ENCODE measurements at regions of chr18 and their contacts with region 1.

Region 1: GRCh38 chr18:9614401-9615279 is at the start of gene PPP4R1:
- DNase-seq: peak; percentile 85 to 95 (median 92)
- ATAC-seq: peak; percentile 54
- H3K4me3 ChIP-seq: peak within 1 kb of the TSS; percentile 84
- H3K27ac ChIP-seq: peak within 1 kb of the TSS; percentile 85
- H3K4me1 ChIP-seq: peaks cover 12 to 35% of the 10 kb centered on the region in 2 experiments
- H3K27me3 ChIP-seq: no peaks in the 10 kb centered on the region
- CTCF ChIP-seq: no peak
- EP300 ChIP-seq: no peak
- POLR2A ChIP-seq: no peak
- RAD21 ChIP-seq: no peak
- polyA plus RNA-seq, gene PPP4R1: 23.5 to 35.1 TPM

Region 2: GRCh38 chr18:9102508-9103375 is 511.9 kb before region 1 on chr18 and contains the start of gene NDUFV2:
- CTCF ChIA-PET with region 1: no interaction called
- POLR2A ChIA-PET with region 1: no interaction called
- in situ Hi-C with region 1: no loop called
- intact Hi-C with region 1: no loop called
- DNase-seq: peak; percentile 99 to 100 (median 100)
- ATAC-seq: peak; percentile 90
- H3K4me3 ChIP-seq: peak within 1 kb of the TSS; percentile 51
- H3K27ac ChIP-seq: peak within 1 kb of the TSS; percentile 80
- H3K4me1 ChIP-seq: peaks cover 5 to 19% of the 10 kb centered on the region in 2 experiments
- H3K27me3 ChIP-seq: no peaks in the 10 kb centered on the region
- CTCF ChIP-seq: 0 out of 6 replicates have a peak, but pooled peaks of 1 of the 3 experiments have one; percentile 5
- EP300 ChIP-seq: no peak
- POLR2A ChIP-seq: peak; percentile 93
- RAD21 ChIP-seq: no peak
- polyA plus RNA-seq, gene NDUFV2: 384 to 550 TPM

Region 3: GRCh38 chr18:9627642-9628041 is 13.0 kb after region 1 on chr18:
- CTCF ChIA-PET with region 1: no interaction called
- POLR2A ChIA-PET with region 1: interaction called, 21 read pairs
- in situ Hi-C with region 1: no loop called
- intact Hi-C with region 1: no loop called
- DNase-seq: peak in 1 of 4 experiments; percentile 30
- ATAC-seq: peak; percentile 71
- H3K4me3 ChIP-seq: no peak overlapping the region
- H3K27ac ChIP-seq: no peak overlapping the region
- H3K4me1 ChIP-seq: peaks cover 2 to 3% of the 10 kb centered on the region in 2 experiments; a peak in 2 of 5 replicates
- H3K27me3 ChIP-seq: no peaks in the 10 kb centered on the region
- CTCF ChIP-seq: no peak
- EP300 ChIP-seq: no peak
- POLR2A ChIP-seq: no peak
- RAD21 ChIP-seq: no peak

Region 4: DNA sequence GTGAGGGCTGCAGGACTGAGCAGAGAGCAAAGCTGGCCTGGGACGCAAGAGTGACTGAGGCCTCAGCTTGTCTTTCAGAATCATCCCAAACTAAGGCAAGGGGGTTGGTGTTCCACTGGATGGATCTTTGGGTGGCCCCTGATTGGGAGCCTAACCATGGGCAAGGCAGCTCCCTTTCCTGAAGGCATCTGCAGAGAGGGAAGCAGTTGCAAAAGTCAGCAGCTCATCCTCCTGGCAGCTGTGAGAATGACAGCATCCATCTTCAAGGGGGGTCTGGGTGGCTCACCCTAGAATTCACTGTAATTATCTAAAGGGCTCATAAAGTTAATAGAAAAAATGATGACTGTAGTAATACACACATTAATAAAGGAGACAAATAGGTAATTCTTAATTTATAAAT is 46.9 kb after region 1 on chr18:
- CTCF ChIA-PET with region 1: no interaction called
- POLR2A ChIA-PET with region 1: interaction called, 4 read pairs
- in situ Hi-C with region 1: no loop called
- intact Hi-C with region 1: loop called (anchors 5 kb)
- DNase-seq: peak in 2 of 4 experiments; percentile 31 to 41
- ATAC-seq: peak; percentile 66
- H3K4me3 ChIP-seq: no peak overlapping the region
- H3K27ac ChIP-seq: no peak overlapping the region
- H3K4me1 ChIP-seq: peaks cover 4 to 8% of the 10 kb centered on the region in 2 experiments; a peak in 3 of 5 replicates
- H3K27me3 ChIP-seq: no peaks in the 10 kb centered on the region
- CTCF ChIP-seq: peak; percentile 55 to 63 (median 58)
- EP300 ChIP-seq: no peak
- POLR2A ChIP-seq: no peak
- RAD21 ChIP-seq: peak; percentile 20 to 73; a peak in 2 of 4 replicates

Region 5: GRCh38 chr18:9683407-9684396 is 69.1 kb after region 1 on chr18:
- CTCF ChIA-PET with region 1: no interaction called
- POLR2A ChIA-PET with region 1: no interaction called
- in situ Hi-C with region 1: no loop called
- intact Hi-C with region 1: no loop called
- DNase-seq: peak in 3 of 4 experiments; percentile 51 to 91 (median 63)
- ATAC-seq: peak; percentile 91
- H3K4me3 ChIP-seq: no peak overlapping the region
- H3K27ac ChIP-seq: peak overlapping the region; percentile 81
- H3K4me1 ChIP-seq: peaks cover 10 to 49% of the 10 kb centered on the region in 2 experiments; a peak in 4 of 5 replicates
- H3K27me3 ChIP-seq: no peaks in the 10 kb centered on the region
- CTCF ChIP-seq: peak; percentile 76 to 86 (median 81)
- EP300 ChIP-seq: 0 out of 2 replicates have a peak, but pooled peaks have one; percentile 15
- POLR2A ChIP-seq: no peak
- RAD21 ChIP-seq: peak; percentile 95 to 97

Region 6: GRCh38 chr18:9711361-9712129 is 96.9 kb after region 1 on chr18:
- CTCF ChIA-PET with region 1: no interaction called
- POLR2A ChIA-PET with region 1: no interaction called
- in situ Hi-C with region 1: no loop called
- intact Hi-C with region 1: no loop called
- DNase-seq: no peak
- ATAC-seq: no peak
- H3K4me3 ChIP-seq: no peak overlapping the region
- H3K27ac ChIP-seq: peak overlapping the region; percentile 2; the same call in 1 of the 3 replicates
- H3K4me1 ChIP-seq: peaks cover 31 to 52% of the 10 kb centered on the region in 2 experiments
- H3K27me3 ChIP-seq: no peaks in the 10 kb centered on the region
- CTCF ChIP-seq: no peak
- EP300 ChIP-seq: no peak
- POLR2A ChIP-seq: no peak
- RAD21 ChIP-seq: no peak